Dendritic cell treated with granulocyte-macrophage colony-stimulating factor and Interleukin-4, amounts not matched to agents 40 ng/mL and 50 ng/mL, for 4 days (primary cell): ENCODE measurements at regions of chr2 and their contacts with region 1.

Region 1: GRCh38 chr2:241355983-241356870 is at the start of gene FARP2:
- H3K4me3 Mint-ChIP-seq: peak within 1 kb of the TSS; percentile 79
- H3K27ac Mint-ChIP-seq: peak within 1 kb of the TSS; percentile 90
- H3K4me1 Mint-ChIP-seq: peaks cover 44% of the 10 kb centered on the region
- H3K27me3 Mint-ChIP-seq: peaks cover 3% of the 10 kb centered on the region

Region 2: GRCh38 chr2:241315093-241315878 is 40.9 kb before region 1 on chr2 and contains the start of gene HDLBP:
- intact Hi-C with region 1: loop called (anchors 2 kb)
- H3K4me3 Mint-ChIP-seq: peak within 1 kb of the TSS; percentile 100
- H3K27ac Mint-ChIP-seq: peak within 1 kb of the TSS; percentile 100
- H3K4me1 Mint-ChIP-seq: peaks cover 72% of the 10 kb centered on the region
- H3K27me3 Mint-ChIP-seq: no peaks in the 10 kb centered on the region

Region 3: GRCh38 chr2:241508240-241509154 is 152.3 kb after region 1 on chr2 and contains the start of gene STK25:
- intact Hi-C with region 1: loop called (anchors 5 kb)
- H3K4me3 Mint-ChIP-seq: peak within 1 kb of the TSS; percentile 89
- H3K27ac Mint-ChIP-seq: peak within 1 kb of the TSS; percentile 69
- H3K4me1 Mint-ChIP-seq: peaks cover 25% of the 10 kb centered on the region
- H3K27me3 Mint-ChIP-seq: peaks cover 43% of the 10 kb centered on the region

Region 4: GRCh38 chr2:241546771-241547498 is 190.7 kb after region 1 on chr2:
- intact Hi-C with region 1: no loop called
- H3K4me3 Mint-ChIP-seq: no peak overlapping the region
- H3K27ac Mint-ChIP-seq: no peak overlapping the region
- H3K4me1 Mint-ChIP-seq: no peaks in the 10 kb centered on the region
- H3K27me3 Mint-ChIP-seq: peaks cover 33% of the 10 kb centered on the region

Region 5: DNA sequence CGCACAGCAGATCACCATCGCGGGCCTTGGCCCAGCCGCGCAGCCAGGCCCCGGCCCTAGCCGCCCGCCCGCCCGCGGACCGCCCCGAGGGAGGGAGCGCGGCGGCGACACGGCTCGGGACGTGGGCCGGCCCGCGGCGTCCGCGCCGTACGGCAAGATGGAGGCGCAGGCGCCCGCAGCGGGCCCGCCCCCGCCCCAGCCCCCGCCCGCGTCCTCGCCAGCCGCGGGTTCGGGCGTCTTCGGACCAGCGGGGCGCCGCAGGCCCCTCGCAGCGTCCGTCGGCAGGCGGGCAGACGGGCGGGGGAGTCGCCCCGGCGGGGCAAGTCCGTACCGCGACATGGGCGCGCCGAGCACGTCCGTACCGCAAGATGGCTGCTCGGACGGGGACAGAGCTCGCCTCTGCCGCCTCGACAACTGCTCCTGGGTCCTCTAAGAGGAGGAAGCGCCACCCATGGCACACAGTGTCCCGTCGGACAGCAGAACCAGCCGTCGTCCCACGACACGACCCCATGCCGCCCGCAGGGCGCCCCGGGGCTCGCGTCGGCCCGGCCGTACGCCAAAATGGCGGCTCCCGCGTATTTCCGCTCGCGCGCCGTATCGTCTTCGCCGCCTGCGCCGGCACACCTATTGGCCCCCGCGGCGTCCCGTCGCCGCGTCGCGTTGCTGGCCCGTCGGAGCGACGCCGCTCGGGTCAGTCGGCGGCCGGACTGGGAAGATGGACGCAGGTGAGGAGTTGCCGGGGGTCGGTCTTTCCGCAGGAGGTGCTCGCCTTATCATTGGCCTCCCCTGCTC is 281.0 kb after region 1 on chr2 and contains the starts of genes ATG4B and THAP4:
- intact Hi-C with region 1: loop called (anchors 10 kb)
- H3K4me3 Mint-ChIP-seq: peak within 1 kb of the TSS; percentile 84
- H3K27ac Mint-ChIP-seq: peak within 1 kb of the TSS; percentile 85
- H3K4me1 Mint-ChIP-seq: peaks cover 63% of the 10 kb centered on the region
- H3K27me3 Mint-ChIP-seq: no peaks in the 10 kb centered on the region